Heart right ventricle (tissue), 16 donors: ENCODE measurements at regions of chr17 and their contacts with region 1.

Region 1: GRCh38 chr17:44522883-44523671 is 19.9 kb upstream of the GPATCH8 start:
- DNase-seq: peak; percentile 63 to 70
- ATAC-seq: peak in 7 of 8 donors; percentile 44 to 89 (median 79)
- H3K4me3 ChIP-seq: no peak overlapping the region
- H3K27ac ChIP-seq: no peak overlapping the region
- H3K4me1 ChIP-seq: no peaks in the 10 kb centered on the region
- H3K27me3 ChIP-seq: peaks cover 0 to 21% (median 14%) of the 10 kb centered on the region in 7 donors
- CTCF ChIP-seq: peak in 8 of 9 donors; percentile 10 to 67 (median 58)

Region 2: DNA sequence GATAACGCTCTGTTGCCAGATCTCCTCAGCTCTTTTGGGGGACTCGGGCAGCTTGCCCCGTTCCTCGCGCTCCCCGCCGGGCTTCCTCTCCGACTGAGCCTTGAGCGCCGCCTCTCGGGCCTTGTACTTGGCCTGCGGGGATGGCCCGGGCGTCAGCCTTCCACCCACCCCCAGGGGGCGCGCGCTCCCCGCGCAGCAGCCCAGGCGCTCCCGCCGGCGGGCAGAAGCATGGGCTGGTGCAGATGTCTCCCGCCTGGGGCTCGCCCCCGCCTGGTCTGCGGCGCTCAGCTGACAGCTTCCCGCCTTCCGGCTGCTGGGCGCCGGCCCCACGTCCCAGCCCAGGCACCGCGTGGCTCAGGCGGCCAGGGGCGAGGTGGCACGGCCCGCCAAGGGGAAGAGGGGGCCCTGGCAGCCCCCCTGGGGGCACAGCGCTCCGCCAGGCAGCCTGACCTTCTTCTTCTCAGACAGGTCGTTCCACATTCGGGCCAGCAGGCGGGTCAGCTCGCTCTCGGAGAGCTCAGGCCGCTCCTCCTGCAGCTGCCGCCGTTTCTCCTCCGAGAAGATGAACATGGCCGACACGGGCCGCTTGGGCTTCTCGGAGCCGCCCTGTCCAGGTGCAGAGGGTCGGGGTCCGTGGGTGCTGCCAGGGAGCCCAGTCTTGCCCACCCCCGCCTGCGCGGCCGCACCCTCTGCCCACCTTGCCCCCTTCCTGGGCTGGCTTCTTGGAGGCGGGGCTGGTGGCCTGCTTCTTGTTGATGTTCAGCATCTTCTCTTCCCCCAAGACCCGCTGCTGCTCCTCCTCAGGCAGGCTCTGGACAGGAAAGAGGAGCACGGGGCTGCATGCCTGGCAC is 312.5 kb before region 1 on chr17:
- intact Hi-C with region 1: loop called in 1 of 10 experiments (anchors 5 kb)
- DNase-seq: peak; percentile 86 to 91
- ATAC-seq: peak; percentile 87 to 96 (median 92)
- H3K4me3 ChIP-seq: peak overlapping the region in 2 of 10 donors; percentile 6 to 19
- H3K27ac ChIP-seq: peak overlapping the region in 7 of 10 donors; percentile 11 to 72 (median 48)
- H3K4me1 ChIP-seq: peaks cover 5 to 26% (median 13%) of the 10 kb centered on the region in 9 donors
- H3K27me3 ChIP-seq: no peaks in the 10 kb centered on the region
- CTCF ChIP-seq: peak; percentile 97 to 100 (median 99)

Region 3: GRCh38 chr17:44350733-44351226 is 172.3 kb before region 1 on chr17:
- intact Hi-C with region 1: loop called in 1 of 10 experiments (anchors 5 kb)
- DNase-seq: peak; percentile 56 to 70
- ATAC-seq: peak in 7 of 8 donors; percentile 15 to 72 (median 69)
- H3K4me3 ChIP-seq: no peak overlapping the region
- H3K27ac ChIP-seq: no peak overlapping the region
- H3K4me1 ChIP-seq: peaks cover 0 to 39% (median 6%) of the 10 kb centered on the region in 9 donors
- H3K27me3 ChIP-seq: no peaks in the 10 kb centered on the region
- CTCF ChIP-seq: peak; percentile 56 to 85 (median 73)

Region 4: DNA sequence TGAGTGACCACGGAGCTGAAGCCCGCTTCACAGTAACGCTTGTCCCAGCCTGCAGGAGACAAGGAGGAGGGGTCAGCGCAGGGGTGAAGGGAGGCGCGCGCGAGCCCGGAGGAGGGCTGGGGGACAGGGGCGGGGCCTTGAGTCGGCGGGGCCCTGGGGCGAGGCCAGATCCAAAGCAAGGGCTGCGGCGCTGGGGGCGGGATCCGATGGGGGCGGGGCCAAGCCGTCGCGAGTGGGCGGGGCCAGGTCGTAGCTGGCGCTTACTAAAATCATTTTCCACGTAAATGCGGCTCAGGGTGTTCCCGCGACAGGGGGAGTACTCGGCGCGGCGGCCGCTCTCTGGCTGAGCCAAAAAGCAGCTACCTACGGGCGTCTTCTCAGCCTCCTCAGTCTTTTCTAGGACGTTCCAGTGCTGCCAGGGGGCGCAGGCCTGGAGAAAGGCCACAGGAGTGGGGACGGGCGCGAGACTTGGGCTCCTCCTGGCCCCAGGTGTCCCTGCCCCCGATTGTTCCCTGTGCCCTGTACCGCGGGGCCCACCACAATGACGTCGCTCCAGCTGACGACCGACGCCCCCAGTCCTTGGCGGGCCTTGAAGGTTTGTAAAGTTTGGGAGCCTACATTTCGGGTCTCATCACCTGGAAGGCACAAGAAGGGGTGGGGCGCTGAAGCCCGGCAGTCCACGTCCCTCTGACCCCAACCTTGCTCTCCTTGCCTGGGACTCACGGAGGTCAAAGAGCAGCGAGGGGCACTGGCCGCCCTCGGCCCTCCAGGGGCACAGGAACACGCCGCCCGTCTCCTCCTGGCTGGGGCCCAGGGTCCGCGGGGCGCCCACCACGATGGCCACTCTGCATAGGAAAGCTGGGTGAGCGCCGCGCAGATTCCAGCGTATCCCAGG is 137.5 kb before region 1 on chr17:
- intact Hi-C with region 1: loop called in 1 of 10 experiments (anchors 10 kb)
- DNase-seq: peak; percentile 77 to 85
- ATAC-seq: peak; percentile 80 to 94 (median 90)
- H3K4me3 ChIP-seq: peak overlapping the region; percentile 19 to 60 (median 52)
- H3K27ac ChIP-seq: peak overlapping the region in 2 of 10 donors; percentile 5 to 31
- H3K4me1 ChIP-seq: peaks cover 0 to 20% (median 13%) of the 10 kb centered on the region in 9 donors
- H3K27me3 ChIP-seq: peaks cover 0 to 31% (median 14%) of the 10 kb centered on the region in 7 donors
- CTCF ChIP-seq: peak in 4 of 9 donors; percentile 17 to 39 (median 26)

Region 5: GRCh38 chr17:44400226-44400847 is 122.7 kb before region 1 on chr17:
- intact Hi-C with region 1: loop called in 5 of 10 experiments (anchors 2 to 10 kb)
- DNase-seq: no peak
- ATAC-seq: peak in 1 of 8 donors; percentile 40
- H3K4me3 ChIP-seq: no peak overlapping the region
- H3K27ac ChIP-seq: no peak overlapping the region
- H3K4me1 ChIP-seq: no peaks in the 10 kb centered on the region
- H3K27me3 ChIP-seq: no peaks in the 10 kb centered on the region
- CTCF ChIP-seq: peak in 7 of 9 donors; percentile 29 to 51 (median 43)

Region 6: DNA sequence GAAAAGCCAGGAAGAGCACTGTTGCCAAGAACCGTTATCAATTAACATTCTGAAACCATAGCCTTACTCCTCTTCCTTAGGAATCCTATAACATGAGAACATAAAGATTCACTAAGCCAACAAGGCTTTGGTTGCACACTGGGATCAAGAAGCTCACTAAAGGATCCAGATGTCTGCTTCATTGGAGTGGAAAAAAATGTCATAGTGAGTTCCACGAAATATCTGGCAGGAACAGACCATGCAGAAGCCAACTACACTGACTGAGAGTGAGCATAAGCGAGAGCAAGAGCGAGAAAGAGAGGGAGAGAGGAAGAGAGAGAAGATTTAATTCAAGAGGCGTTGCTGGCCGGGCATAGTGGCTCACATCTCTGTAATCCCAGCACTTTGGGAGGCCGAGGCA is 119.8 kb after region 1 on chr17:
- intact Hi-C with region 1: no loop called
- DNase-seq: no peak
- ATAC-seq: peak in 7 of 8 donors; percentile 47 to 68 (median 62)
- H3K4me3 ChIP-seq: no peak overlapping the region
- H3K27ac ChIP-seq: no peak overlapping the region
- H3K4me1 ChIP-seq: peaks cover 0 to 3% (median 0%) of the 10 kb centered on the region in 9 donors
- H3K27me3 ChIP-seq: peaks cover 0 to 18% (median 5%) of the 10 kb centered on the region in 7 donors
- CTCF ChIP-seq: no peak